OCI-LY7 (cell line): ENCODE measurements at regions of chr3 and their contacts with region 1.

Region 1: DNA sequence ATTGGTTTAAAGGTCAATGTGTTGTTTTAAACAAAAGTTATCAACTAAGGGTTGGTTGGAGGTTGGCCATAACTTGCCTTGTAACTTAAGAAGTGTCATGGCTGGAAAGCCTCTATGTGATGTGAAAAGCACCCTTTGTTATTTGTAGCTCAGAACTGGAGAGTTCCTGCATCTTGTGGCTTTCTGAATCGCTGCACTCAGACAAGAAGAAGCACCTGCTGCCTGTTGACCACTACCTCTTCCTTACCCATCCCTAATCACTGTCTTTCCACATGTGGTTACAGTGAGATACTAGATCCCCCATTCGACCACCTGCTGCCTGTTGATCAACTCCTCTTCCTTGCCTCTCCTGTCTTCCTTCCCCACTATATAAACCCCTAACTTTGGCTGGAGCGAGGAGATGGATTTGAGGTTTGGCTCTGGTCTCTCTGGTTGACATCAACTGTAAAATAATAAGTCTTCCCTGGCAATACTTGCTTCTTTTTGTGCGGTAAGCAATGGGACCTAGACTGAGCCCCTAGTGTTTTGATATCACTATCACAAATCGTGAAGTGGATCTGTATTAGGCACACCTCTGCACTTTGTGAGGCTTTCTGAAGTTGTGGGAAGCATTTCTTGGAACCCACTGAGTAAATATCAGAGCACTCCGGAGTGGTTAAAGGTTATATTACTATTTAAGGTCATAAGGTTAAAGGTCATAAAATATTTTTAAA is 13.8 kb downstream of the RPL39L start:
- DNase-seq: peak; percentile 89
- H3K4me3 ChIP-seq: peak overlapping the region; percentile 19
- H3K27ac ChIP-seq: peak overlapping the region; percentile 85
- H3K4me1 ChIP-seq: peaks cover 36% of the 10 kb centered on the region
- CTCF ChIP-seq: peak; percentile 68

Region 2: DNA sequence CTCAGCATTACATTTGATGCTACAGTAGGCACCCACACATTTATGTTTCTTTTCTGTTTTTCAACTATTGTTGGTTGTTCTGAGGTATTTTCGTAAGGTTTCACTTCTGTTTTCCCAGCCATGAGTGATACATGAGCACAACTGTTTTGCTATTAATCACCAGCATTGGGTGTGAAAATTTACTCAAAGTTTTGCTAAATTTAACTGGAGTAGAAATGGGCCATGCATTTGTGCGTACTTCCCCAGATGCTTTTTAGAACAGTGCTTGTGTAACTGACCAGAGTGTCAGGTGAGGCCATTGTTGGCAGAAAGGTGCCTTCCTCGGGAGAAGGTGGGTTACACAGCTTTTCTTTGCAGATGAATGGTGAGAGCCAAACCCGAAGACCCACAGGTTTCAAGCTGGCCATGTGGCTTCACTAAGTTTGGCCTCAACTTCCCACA is 124.7 kb before region 1 on chr3:
- CTCF ChIA-PET with region 1: no interaction called
- POLR2A ChIA-PET with region 1: no interaction called
- intact Hi-C with region 1: no loop called
- DNase-seq: peak; percentile 92
- H3K4me3 ChIP-seq: peak overlapping the region; percentile 77
- H3K27ac ChIP-seq: peak overlapping the region; percentile 98
- H3K4me1 ChIP-seq: peaks cover 72% of the 10 kb centered on the region
- CTCF ChIP-seq: no peak

Region 3: DNA sequence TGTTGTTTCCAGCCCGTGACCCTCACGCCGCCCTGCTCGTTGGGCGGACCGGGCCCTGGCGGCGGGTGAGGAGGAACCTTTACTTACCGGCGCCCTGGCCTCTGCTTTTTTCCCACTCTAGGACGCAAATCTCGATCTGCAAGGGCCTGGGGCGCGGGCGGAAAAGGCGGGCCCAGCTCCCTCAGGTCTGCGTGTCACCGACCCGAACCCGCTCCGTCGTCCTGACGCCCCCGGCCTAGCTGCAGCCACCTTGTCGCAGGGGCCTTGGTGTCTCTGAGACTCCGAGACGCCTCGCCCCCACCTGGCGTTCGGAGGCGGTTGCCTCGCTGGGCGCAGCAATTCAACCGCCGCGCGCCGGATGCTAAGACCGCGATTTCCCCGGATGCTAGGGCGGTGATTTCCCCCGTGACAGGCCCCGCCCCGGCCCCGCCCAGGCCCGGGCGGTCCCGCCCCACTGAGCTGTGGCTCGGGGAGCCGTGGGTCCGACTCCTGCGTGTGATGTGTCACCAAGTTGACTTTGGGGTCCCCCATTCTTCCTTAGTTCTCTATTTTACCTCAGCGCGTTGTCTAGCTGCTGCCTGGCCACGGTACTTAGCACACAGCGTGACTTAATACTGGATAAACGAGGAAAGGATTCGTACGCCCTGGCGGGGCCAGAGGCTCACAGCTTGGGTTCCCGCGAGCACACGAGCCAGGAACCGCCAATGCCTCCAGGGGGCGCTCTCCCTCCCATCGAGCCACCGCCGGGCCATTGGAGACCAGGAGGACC is 13.8 kb after region 1 on chr3 and contains the start of gene RPL39L:
- CTCF ChIA-PET with region 1: interaction called, 9 read pairs
- POLR2A ChIA-PET with region 1: interaction called, 27 read pairs
- intact Hi-C with region 1: no loop called
- DNase-seq: peak; percentile 98
- H3K4me3 ChIP-seq: peak within 1 kb of the TSS; percentile 75
- H3K27ac ChIP-seq: peak within 1 kb of the TSS; percentile 86
- H3K4me1 ChIP-seq: peaks cover 15% of the 10 kb centered on the region
- CTCF ChIP-seq: peak; percentile 99
- total RNA-seq, gene RPL39L: 79.2 and 92.2 TPM in 2 replicates